ENCODE measurements at regions of chr10 and their contacts with region 1.

Region 1: GRCh38 chr10:29735596-29736318 is 101.0 kb upstream of the SVIL start:
- DNase-seq: peak; percentile 93 to 99
- H3K4me3 ChIP-seq: peak overlapping the region; percentile 75
- H3K4me3 Mint-ChIP-seq: peak overlapping the region; percentile 91
- H3K27ac Mint-ChIP-seq: peak overlapping the region; percentile 62
- H3K4me1 ChIP-seq: peaks cover 30% of the 10 kb centered on the region
- H3K4me1 Mint-ChIP-seq: peaks cover 21% of the 10 kb centered on the region
- H3K27me3 ChIP-seq: no peaks in the 10 kb centered on the region
- H3K27me3 Mint-ChIP-seq: no peaks in the 10 kb centered on the region
- CTCF ChIP-seq: peak; percentile 98 to 99

Region 2: DNA sequence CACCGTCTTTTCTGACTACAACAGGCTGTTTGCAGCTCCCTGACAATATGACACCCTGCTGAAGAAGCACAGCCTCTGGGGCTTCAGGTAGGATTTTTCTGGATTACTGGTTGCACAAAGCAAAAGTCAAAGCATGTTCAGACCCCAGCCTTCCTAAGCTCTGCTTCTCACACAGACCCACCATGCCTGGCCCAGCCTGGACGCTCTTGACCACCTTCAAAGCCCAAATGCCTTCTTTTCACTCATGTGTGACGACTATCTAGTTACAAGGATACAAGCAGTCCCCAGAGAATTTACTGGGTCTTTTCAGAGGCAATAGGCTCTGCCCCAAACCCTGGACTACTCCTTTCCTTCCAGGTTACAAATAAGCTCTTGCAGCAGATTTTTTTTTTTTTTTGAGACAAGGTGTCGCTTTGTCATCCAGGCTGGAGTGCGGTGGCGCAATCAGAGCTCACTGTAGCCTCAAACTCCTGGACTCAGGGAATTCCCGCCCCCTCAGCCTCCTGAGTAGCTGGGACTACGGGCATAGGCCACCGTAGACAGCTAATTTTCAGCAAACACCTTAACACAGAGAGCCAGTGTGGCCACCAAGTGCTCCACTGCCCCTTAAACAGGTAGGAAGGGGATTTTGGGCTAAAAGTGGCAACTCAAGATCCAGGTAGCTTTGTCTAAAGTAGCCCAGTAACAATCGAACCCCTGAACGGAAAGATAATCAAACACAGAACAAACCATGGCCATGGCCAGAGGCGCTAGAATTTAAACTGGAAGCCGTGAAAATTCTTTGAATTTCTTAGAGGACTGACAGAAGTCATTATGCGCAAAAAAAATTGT is 117.2 kb before region 1 on chr10:
- CTCF ChIA-PET with region 1: interaction called, 3 read pairs
- POLR2A ChIA-PET with region 1: interaction called, 6 read pairs
- intact Hi-C with region 1: loop called (anchors 5 kb)
- DNase-seq: peak; percentile 85 to 88
- H3K4me3 ChIP-seq: peak overlapping the region; percentile 20
- H3K4me3 Mint-ChIP-seq: peak overlapping the region; percentile 71
- H3K27ac Mint-ChIP-seq: peak overlapping the region; percentile 73
- H3K4me1 ChIP-seq: peaks cover 36% of the 10 kb centered on the region
- H3K4me1 Mint-ChIP-seq: peaks cover 43% of the 10 kb centered on the region
- H3K27me3 ChIP-seq: no peaks in the 10 kb centered on the region
- H3K27me3 Mint-ChIP-seq: no peaks in the 10 kb centered on the region
- CTCF ChIP-seq: no peak

Region 3: DNA sequence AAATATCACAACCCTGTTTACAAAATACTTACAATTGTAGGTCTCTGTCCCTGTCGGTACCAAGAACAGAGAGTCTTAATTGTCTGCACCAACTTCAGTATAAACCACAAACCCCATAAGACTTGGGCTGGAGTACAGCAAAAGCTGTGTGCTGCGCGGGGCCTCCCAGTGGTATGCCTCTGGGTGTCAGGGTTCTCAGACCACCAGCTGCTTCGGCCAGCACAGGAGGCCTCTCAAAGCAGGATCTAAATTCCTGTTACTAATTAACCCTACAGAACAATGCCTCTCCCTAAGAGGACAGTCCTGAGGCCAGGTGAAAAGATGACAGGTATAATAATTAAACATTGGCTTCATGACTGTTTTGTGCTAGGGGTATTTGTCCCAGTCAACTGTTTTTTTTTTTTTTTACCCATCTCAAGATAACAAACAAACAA is 100.0 kb before region 1 on chr10:
- CTCF ChIA-PET with region 1: interaction called, 4 read pairs
- POLR2A ChIA-PET with region 1: no interaction called
- intact Hi-C with region 1: loop called (anchors 1 kb)
- DNase-seq: peak; percentile 88 to 93
- H3K4me3 ChIP-seq: peak overlapping the region; percentile 23
- H3K4me3 Mint-ChIP-seq: peak overlapping the region; percentile 69
- H3K27ac Mint-ChIP-seq: peak overlapping the region; percentile 85
- H3K4me1 ChIP-seq: peaks cover 38% of the 10 kb centered on the region
- H3K4me1 Mint-ChIP-seq: peaks cover 48% of the 10 kb centered on the region
- H3K27me3 ChIP-seq: no peaks in the 10 kb centered on the region
- H3K27me3 Mint-ChIP-seq: no peaks in the 10 kb centered on the region
- CTCF ChIP-seq: peak in 1 of 2 experiments; percentile 50

Region 4: GRCh38 chr10:29715296-29715695 is 20.5 kb before region 1 on chr10:
- CTCF ChIA-PET with region 1: no interaction called
- POLR2A ChIA-PET with region 1: no interaction called
- intact Hi-C with region 1: no loop called
- DNase-seq: no peak
- H3K4me3 ChIP-seq: no peak overlapping the region
- H3K4me3 Mint-ChIP-seq: no peak overlapping the region
- H3K27ac Mint-ChIP-seq: no peak overlapping the region
- H3K4me1 ChIP-seq: peaks cover 33% of the 10 kb centered on the region
- H3K4me1 Mint-ChIP-seq: peaks cover 30% of the 10 kb centered on the region
- H3K27me3 ChIP-seq: no peaks in the 10 kb centered on the region
- H3K27me3 Mint-ChIP-seq: no peaks in the 10 kb centered on the region
- CTCF ChIP-seq: no peak

Region 5: DNA sequence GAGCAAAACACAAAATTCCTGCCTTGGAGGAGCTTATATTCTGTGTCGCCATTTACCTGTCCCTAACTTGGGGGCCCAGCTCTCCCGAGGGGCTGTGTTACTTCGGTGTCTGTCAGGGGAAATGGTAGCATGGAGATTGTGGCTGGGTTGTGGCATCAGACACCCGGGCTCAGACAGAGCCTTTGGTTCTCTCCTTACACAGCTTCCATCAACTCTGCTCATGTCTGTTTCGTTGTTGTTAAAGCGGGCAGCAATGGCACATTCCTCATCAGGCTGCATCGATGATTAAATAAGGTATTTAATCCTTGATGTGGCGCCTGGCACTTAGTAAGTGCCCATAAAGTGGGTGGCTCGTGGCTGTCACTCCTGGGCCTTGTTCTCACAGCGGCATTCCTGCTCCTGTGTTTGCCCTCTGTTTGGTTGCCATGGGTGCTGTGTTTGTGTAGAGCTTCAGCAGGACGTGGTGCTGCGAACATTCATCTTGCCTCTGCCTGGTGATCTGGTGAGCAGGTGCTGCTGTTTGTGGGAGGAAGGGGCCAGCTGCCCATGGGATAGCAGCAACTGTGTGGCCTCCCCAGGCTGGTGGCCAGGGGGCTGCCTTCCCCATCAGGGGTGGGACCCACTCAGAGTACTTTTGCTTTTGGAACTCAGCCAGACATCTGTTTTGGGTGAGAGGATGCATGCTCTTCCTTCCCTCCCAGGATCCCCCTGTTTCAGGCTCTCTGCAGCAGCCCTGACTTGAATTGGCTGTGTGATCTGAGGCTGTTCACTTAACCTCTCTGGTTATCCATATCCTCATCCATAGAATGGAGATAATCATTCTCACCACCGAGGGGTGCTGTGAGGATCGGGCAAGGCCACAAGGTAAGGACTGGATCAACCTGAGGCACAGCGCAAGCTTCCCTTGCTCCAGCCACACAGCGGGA is 106.2 kb after region 1 on chr10:
- CTCF ChIA-PET with region 1: no interaction called
- POLR2A ChIA-PET with region 1: no interaction called
- intact Hi-C with region 1: loop called (anchors 2 kb)
- DNase-seq: peak; percentile 79 to 81
- H3K4me3 ChIP-seq: no peak overlapping the region
- H3K4me3 Mint-ChIP-seq: peak overlapping the region; percentile 31
- H3K27ac Mint-ChIP-seq: peak overlapping the region; percentile 93
- H3K4me1 ChIP-seq: peaks cover 47% of the 10 kb centered on the region
- H3K4me1 Mint-ChIP-seq: peaks cover 52% of the 10 kb centered on the region
- H3K27me3 ChIP-seq: no peaks in the 10 kb centered on the region
- H3K27me3 Mint-ChIP-seq: no peaks in the 10 kb centered on the region
- CTCF ChIP-seq: no peak